Naive thymus-derived CD4-positive, alpha-beta T cell (primary cell): ENCODE measurements at regions of chr17 and their contacts with region 1.

Region 1: GRCh38 chr17:32877164-32877764 is 340 bp upstream of the MYO1D start:
- DNase-seq: peak; percentile 87 to 99 (median 95)
- ATAC-seq: peak; percentile 98
- H3K4me3 ChIP-seq: peak overlapping the region; percentile 59
- H3K4me3 Mint-ChIP-seq: peak overlapping the region; percentile 72 to 88 (median 83)
- H3K27ac ChIP-seq: peak overlapping the region; percentile 66
- H3K27ac Mint-ChIP-seq: peak overlapping the region; percentile 56 to 94 (median 83)
- H3K4me1 ChIP-seq: peaks cover 0 to 8% of the 10 kb centered on the region in 2 donors
- H3K4me1 Mint-ChIP-seq: peaks cover 7 to 15% (median 11%) of the 10 kb centered on the region in 7 donors
- H3K27me3 ChIP-seq: peaks cover 0 to 4% of the 10 kb centered on the region in 2 donors
- H3K27me3 Mint-ChIP-seq: peaks cover 0 to 42% (median 7%) of the 10 kb centered on the region in 5 donors

Region 2: DNA sequence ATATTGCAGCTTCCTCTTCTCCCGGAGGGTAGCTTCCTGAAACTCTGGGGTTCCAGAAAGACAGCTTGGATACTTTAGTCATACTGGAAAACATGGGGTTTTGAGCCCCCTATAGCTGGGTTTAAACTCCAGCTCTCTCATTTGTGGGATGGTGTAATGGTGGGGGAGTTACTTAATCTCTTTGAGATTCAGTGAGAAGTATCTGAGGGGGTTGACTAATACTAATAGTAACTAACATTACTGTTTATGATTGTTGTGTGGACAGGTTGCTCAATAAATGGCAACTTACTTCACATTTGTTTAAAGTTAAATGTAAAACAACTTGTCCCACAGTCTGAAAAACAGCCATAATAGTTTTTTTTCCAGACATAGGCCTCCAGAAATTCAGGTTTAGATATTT is 945.5 kb before region 1 on chr17:
- CTCF ChIA-PET with region 1: no interaction called
- POLR2A ChIA-PET with region 1: no interaction called
- intact Hi-C with region 1: loop called in 1 of 2 experiments (anchors 5 kb)
- DNase-seq: no peak
- ATAC-seq: no peak
- H3K4me3 ChIP-seq: no peak overlapping the region
- H3K4me3 Mint-ChIP-seq: no peak overlapping the region
- H3K27ac ChIP-seq: no peak overlapping the region
- H3K27ac Mint-ChIP-seq: no peak overlapping the region
- H3K4me1 ChIP-seq: peaks cover 0 to 5% of the 10 kb centered on the region in 2 donors
- H3K4me1 Mint-ChIP-seq: peaks cover 0 to 8% (median 3%) of the 10 kb centered on the region in 7 donors
- H3K27me3 ChIP-seq: no peaks in the 10 kb centered on the region
- H3K27me3 Mint-ChIP-seq: no peaks in the 10 kb centered on the region

Region 3: GRCh38 chr17:32142038-32142856 is 735.0 kb before region 1 on chr17 and contains the start of gene RHOT1:
- CTCF ChIA-PET with region 1: no interaction called
- POLR2A ChIA-PET with region 1: no interaction called
- intact Hi-C with region 1: no loop called
- DNase-seq: peak; percentile 55 to 84 (median 75)
- ATAC-seq: peak; percentile 90
- H3K4me3 ChIP-seq: peak within 1 kb of the TSS; percentile 91
- H3K4me3 Mint-ChIP-seq: peak within 1 kb of the TSS; percentile 92 to 100 (median 96)
- H3K27ac ChIP-seq: peak within 1 kb of the TSS; percentile 85
- H3K27ac Mint-ChIP-seq: peak within 1 kb of the TSS; percentile 77 to 93 (median 91)
- H3K4me1 ChIP-seq: peaks cover 5 to 15% of the 10 kb centered on the region in 2 donors
- H3K4me1 Mint-ChIP-seq: peaks cover 5 to 43% (median 39%) of the 10 kb centered on the region in 7 donors
- H3K27me3 ChIP-seq: no peaks in the 10 kb centered on the region
- H3K27me3 Mint-ChIP-seq: peaks cover 0 to 4% (median 0%) of the 10 kb centered on the region in 5 donors
- total RNA-seq, gene RHOT1: 24.3 to 31.7 (median 29.3) TPM

Region 4: GRCh38 chr17:32444308-32445073 is 432.8 kb before region 1 on chr17 and contains the start of gene PSMD11:
- CTCF ChIA-PET with region 1: interaction called, 4 read pairs
- POLR2A ChIA-PET with region 1: no interaction called
- intact Hi-C with region 1: loop called in 1 of 2 experiments (anchors 1 kb)
- DNase-seq: peak; percentile 98 to 100 (median 99)
- ATAC-seq: peak; percentile 99
- H3K4me3 ChIP-seq: peak within 1 kb of the TSS; percentile 80
- H3K4me3 Mint-ChIP-seq: peak within 1 kb of the TSS; percentile 78 to 93 (median 86)
- H3K27ac ChIP-seq: peak within 1 kb of the TSS; percentile 94
- H3K27ac Mint-ChIP-seq: peak within 1 kb of the TSS; percentile 52 to 83 (median 78)
- H3K4me1 ChIP-seq: peaks cover 13 to 14% of the 10 kb centered on the region in 2 donors
- H3K4me1 Mint-ChIP-seq: peaks cover 25 to 46% (median 36%) of the 10 kb centered on the region in 7 donors
- H3K27me3 ChIP-seq: no peaks in the 10 kb centered on the region
- H3K27me3 Mint-ChIP-seq: peaks cover 0 to 23% (median 0%) of the 10 kb centered on the region in 5 donors
- total RNA-seq, gene PSMD11: 60.1 to 112 (median 67.5) TPM

Region 5: DNA sequence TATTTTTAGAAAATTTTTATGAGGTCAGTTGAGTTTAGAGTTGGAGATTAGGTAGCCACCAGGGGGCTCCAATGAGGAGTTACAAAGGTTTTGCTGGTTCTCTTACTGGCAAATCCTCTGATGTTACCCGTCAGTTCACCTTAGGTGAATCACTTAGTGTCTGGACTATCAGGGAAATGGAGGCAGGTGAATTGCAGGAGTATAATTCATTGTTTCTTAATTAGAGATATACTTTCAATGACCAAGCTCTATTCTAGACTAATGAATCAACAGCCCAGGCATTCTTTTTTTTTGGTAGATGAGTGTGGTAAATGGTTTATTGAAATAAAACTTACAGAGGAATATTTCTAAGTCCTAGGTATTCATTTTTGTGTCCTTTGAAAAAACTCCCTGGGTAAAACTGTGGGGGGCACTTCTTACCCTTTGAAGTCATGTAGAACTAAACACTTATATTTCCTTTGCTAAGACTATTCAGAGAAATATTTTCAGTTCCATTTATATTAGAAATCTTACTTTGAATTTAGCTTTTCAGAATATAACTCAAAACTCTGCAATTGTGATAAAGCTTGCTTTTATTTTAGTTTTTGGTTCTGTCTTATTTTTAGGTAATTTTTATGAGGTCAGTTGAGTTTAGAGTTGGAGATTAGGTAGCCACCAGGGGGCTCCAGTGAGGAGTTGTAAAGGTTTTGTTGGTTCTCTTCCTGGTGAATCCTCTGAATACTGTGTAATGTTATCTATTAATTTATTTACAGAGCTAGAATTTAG is 415.2 kb before region 1 on chr17:
- CTCF ChIA-PET with region 1: no interaction called
- POLR2A ChIA-PET with region 1: no interaction called
- intact Hi-C with region 1: loop called in 1 of 2 experiments (anchors 5 kb)
- DNase-seq: peak; percentile 27 to 71 (median 63)
- ATAC-seq: peak; percentile 91
- H3K4me3 ChIP-seq: no peak overlapping the region
- H3K4me3 Mint-ChIP-seq: peak overlapping the region in 1 of 10 donors; percentile 15
- H3K27ac ChIP-seq: no peak overlapping the region
- H3K27ac Mint-ChIP-seq: peak overlapping the region in 7 of 9 donors; percentile 0 to 87 (median 19)
- H3K4me1 ChIP-seq: peaks cover 8 to 9% of the 10 kb centered on the region in 2 donors
- H3K4me1 Mint-ChIP-seq: peaks cover 25 to 43% (median 31%) of the 10 kb centered on the region in 7 donors
- H3K27me3 ChIP-seq: no peaks in the 10 kb centered on the region
- H3K27me3 Mint-ChIP-seq: no peaks in the 10 kb centered on the region

Region 6: DNA sequence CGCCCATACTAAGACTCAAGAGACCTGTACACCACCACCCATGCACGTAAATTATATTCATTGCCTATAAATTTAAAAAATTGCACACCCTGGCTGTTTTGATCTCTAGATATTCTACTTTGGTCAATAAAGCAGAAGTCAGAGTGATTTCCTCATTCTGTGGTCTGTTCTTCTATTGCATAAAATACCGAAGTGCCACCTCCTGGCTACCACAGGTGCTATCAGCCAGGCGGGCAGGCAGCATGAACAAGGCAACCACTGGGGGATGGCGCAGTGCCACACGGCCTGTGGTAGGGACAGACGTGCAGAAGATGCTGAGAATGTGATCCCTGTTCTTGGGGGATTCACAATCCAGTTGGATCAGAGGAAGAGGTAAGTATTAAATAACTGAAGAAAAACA is 268.2 kb before region 1 on chr17:
- CTCF ChIA-PET with region 1: no interaction called
- POLR2A ChIA-PET with region 1: no interaction called
- intact Hi-C with region 1: loop called in 1 of 2 experiments (anchors 2 kb)
- DNase-seq: peak; percentile 48 to 81 (median 72)
- ATAC-seq: peak; percentile 100
- H3K4me3 ChIP-seq: no peak overlapping the region
- H3K4me3 Mint-ChIP-seq: no peak overlapping the region
- H3K27ac ChIP-seq: no peak overlapping the region
- H3K27ac Mint-ChIP-seq: peak overlapping the region in 2 of 9 donors; percentile 0 to 14
- H3K4me1 ChIP-seq: no peaks in the 10 kb centered on the region
- H3K4me1 Mint-ChIP-seq: peaks cover 6 to 9% (median 8%) of the 10 kb centered on the region in 7 donors
- H3K27me3 ChIP-seq: no peaks in the 10 kb centered on the region
- H3K27me3 Mint-ChIP-seq: peaks cover 0 to 6% (median 0%) of the 10 kb centered on the region in 5 donors

Region 7: GRCh38 chr17:32783602-32784001 is 93.7 kb before region 1 on chr17:
- CTCF ChIA-PET with region 1: interaction called, 39 read pairs
- POLR2A ChIA-PET with region 1: interaction called, 7 read pairs
- intact Hi-C with region 1: loop called (anchors 1 kb)
- DNase-seq: peak in 7 of 9 donors; percentile 15 to 60 (median 43)
- ATAC-seq: peak; percentile 79
- H3K4me3 ChIP-seq: no peak overlapping the region
- H3K4me3 Mint-ChIP-seq: no peak overlapping the region
- H3K27ac ChIP-seq: no peak overlapping the region
- H3K27ac Mint-ChIP-seq: no peak overlapping the region
- H3K4me1 ChIP-seq: no peaks in the 10 kb centered on the region
- H3K4me1 Mint-ChIP-seq: no peaks in the 10 kb centered on the region
- H3K27me3 ChIP-seq: no peaks in the 10 kb centered on the region
- H3K27me3 Mint-ChIP-seq: peaks cover 0 to 13% (median 0%) of the 10 kb centered on the region in 5 donors

Region 8: DNA sequence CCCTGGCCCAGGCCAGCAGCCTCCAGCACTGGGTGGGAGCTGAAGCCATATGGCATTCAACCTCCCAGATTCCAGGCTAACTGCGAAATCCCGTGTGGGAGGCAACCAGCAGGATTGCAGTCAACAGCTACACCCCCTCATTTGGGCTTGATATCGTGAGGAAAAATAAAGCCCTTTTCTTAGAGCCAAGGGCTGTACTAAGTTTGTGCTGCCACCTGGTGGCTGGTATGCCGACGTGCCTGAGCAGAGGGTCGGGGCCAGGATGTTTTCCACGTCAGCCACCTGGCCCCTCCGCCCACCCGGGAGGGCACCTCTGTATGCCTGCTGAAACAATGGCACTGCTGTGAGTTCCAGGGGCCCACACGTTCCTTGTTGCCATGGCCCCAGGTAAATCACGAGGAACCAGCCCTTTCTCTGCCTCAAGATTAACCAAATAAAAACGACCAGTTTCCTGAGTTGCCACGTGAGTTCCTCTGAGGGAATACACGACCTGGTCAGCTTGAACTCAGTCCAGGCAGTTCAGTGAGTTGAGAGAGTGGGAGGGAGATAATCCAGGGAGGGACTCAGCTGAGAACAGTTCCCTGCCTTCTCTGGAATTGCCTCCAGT is 59.7 kb after region 1 on chr17:
- CTCF ChIA-PET with region 1: interaction called, 8 read pairs
- POLR2A ChIA-PET with region 1: no interaction called
- intact Hi-C with region 1: loop called in 1 of 2 experiments (anchors 1 kb)
- DNase-seq: peak; percentile 25 to 64 (median 48)
- ATAC-seq: peak; percentile 77
- H3K4me3 ChIP-seq: no peak overlapping the region
- H3K4me3 Mint-ChIP-seq: peak overlapping the region in 5 of 10 donors; percentile 14 to 60 (median 37)
- H3K27ac ChIP-seq: no peak overlapping the region
- H3K27ac Mint-ChIP-seq: no peak overlapping the region
- H3K4me1 ChIP-seq: no peaks in the 10 kb centered on the region
- H3K4me1 Mint-ChIP-seq: peaks cover 0 to 5% (median 0%) of the 10 kb centered on the region in 7 donors
- H3K27me3 ChIP-seq: peaks cover 0 to 3% of the 10 kb centered on the region in 2 donors
- H3K27me3 Mint-ChIP-seq: peaks cover 14 to 31% (median 27%) of the 10 kb centered on the region in 5 donors